Left ventricle myocardium inferior (tissue), 1 donor: ENCODE measurements at regions of chr14 and their contacts with region 1.

Region 1: DNA sequence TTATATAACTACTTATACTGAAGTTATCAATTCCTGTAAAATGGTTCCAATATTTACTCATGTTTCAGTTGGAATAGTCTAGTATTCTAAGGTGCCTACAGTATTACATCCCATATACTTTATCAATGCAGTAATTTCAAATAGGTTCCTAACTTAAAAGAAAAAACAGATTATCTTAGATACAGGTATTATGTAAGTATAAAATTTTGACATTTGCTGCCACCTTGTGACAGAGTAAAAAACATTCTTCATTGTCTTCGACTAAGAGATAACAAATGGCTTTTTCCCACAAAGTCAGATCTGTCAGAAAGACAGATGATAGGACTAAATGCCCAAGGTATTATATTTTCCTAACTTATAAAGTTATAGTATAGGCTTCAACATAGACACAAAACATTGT is 78.7 kb downstream of the TXNDC16 start:
- DNase-seq: no peak
- H3K4me3 ChIP-seq: no peak overlapping the region
- H3K27ac ChIP-seq: no peak overlapping the region
- H3K4me1 ChIP-seq: no peaks in the 10 kb centered on the region
- H3K27me3 ChIP-seq: no peaks in the 10 kb centered on the region
- CTCF ChIP-seq: peak; percentile 49

Region 2: DNA sequence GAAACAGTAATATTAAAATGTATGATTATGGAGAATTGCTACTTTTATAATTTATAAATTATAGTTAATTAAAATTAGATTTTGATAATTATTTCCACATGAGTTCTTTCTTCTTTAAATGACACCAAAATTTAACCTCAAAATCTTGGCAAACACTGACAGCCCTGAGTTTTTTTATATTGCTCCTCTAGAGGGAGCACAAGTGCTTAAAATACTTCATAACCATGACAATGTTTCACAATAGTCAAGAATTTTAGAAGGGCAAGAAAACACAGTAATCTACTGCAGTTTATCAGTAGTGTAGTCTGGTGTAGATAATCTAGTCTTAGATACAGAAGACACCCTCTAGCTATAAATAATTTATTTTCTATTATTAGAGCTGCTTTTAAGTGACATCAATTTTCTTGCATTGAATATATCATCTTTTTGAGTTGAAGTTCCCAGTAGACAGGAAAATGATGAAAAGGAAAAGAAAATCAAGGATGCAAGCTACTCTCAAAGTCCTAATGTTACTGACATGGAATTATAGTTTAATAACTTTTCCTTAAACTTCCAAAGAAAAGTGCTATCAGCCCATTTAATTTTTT is 173.8 kb before region 1 on chr14:
- intact Hi-C with region 1: loop called (anchors 5 kb)
- DNase-seq: no peak
- H3K4me3 ChIP-seq: no peak overlapping the region
- H3K27ac ChIP-seq: no peak overlapping the region
- H3K4me1 ChIP-seq: no peaks in the 10 kb centered on the region
- H3K27me3 ChIP-seq: no peaks in the 10 kb centered on the region
- CTCF ChIP-seq: peak; percentile 79